A673 (cell line): ENCODE measurements at regions of chr7 and their contacts with region 1.

Region 1: DNA sequence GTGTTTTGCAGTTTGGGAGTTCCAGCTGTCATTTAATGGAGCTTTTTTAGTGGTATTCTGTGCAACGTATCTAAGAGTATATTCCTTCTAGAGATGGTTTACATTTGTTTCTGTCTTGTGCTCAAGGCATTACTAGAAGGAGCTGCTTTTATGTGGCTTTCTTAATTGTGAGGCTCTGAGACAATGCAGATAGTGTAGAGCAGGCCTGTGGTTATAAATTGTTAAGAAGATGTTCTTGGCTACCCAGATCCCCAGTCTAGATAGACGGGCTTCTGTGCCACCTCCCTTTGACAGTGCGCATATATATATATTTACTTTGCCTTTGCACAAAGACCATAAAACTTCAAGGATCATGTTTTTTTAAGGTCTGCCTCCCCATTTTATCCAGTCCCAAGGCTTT is 160.8 kb upstream of the PODXL start:
- DNase-seq: no peak
- H3K4me3 ChIP-seq: no peak overlapping the region
- H3K27ac ChIP-seq: no peak overlapping the region
- H3K4me1 ChIP-seq: peaks cover 6% of the 10 kb centered on the region
- H3K27me3 ChIP-seq: no peaks in the 10 kb centered on the region
- CTCF ChIP-seq: no peak

Region 2: DNA sequence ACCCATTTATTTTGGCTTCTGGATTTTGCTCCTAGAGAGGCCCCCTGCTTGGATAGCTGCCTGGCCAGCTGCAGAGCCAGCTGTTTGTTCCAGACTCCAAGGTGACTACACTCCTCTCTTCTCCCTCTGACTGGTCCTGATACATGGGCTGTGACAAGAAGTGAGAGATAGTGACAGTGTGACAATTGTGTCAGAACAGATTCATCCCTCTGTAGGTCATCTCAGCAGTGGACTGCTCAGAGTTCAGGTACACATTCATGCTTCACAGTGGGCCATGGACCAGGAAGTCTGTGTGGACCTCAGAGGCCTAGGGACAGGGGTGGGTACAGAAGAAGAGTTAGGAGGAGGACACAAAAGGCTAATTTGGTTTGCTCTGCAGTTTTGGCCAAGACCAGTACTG is 577.7 kb before region 1 on chr7:
- CTCF ChIA-PET with region 1: no interaction called
- POLR2A ChIA-PET with region 1: no interaction called
- intact Hi-C with region 1: no loop called
- DNase-seq: no peak
- H3K4me3 ChIP-seq: no peak overlapping the region
- H3K27ac ChIP-seq: no peak overlapping the region
- H3K4me1 ChIP-seq: peaks cover 5% of the 10 kb centered on the region
- H3K27me3 ChIP-seq: no peaks in the 10 kb centered on the region
- CTCF ChIP-seq: no peak

Region 3: DNA sequence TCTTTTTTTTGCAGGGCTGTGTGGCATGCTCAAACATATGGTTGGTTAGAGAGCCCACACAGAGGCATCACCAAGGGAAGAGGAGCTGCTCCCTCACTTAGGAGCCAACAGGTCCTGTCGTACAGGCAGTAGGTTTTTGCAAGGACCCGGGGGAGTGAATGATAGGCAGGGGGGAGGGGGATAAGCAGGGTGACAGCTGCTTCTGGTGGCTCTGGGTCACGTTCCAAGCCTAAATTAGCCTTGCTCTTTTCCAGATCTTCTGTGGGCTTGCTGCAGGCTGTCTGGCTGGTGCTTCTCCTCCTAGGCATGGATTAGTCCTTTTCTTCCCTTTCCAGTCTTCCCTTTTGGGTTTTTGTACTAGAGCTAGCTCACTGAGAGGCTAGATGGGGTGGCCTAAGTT is 43.0 kb before region 1 on chr7:
- CTCF ChIA-PET with region 1: no interaction called
- POLR2A ChIA-PET with region 1: no interaction called
- intact Hi-C with region 1: no loop called
- DNase-seq: no peak
- H3K4me3 ChIP-seq: no peak overlapping the region
- H3K27ac ChIP-seq: no peak overlapping the region
- H3K4me1 ChIP-seq: no peaks in the 10 kb centered on the region
- H3K27me3 ChIP-seq: peaks cover 17% of the 10 kb centered on the region
- CTCF ChIP-seq: no peak

Region 4: DNA sequence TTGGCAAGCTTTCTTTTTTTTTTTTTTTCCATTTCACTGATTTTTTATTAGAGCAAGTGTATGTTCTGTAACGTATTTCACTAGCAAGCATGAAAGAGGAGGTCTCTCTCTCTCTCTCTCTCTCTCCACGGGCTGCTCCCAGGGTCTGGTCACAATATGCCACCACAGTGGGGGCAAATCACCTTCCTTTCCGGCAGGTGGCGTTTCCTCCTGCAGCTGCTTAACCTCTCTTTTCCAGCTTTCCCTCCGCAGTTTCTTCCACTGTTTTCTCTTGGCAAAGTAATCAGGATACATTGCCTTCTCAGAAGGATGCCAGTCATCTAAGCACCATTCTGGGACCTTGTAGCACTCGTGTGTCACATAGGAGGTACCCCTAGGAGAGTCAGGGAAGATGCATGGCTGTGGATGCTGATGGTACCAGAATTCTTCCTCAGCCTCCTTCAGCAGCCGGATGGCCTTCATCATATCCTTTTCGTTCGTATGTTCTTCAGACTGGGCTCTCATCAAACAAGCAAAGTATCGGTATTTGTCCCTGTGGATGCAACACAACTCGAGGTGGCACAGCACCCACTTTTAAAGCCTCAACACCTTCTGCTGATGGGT is 36.5 kb after region 1 on chr7:
- CTCF ChIA-PET with region 1: no interaction called
- POLR2A ChIA-PET with region 1: no interaction called
- intact Hi-C with region 1: no loop called
- DNase-seq: peak; percentile 50
- H3K4me3 ChIP-seq: no peak overlapping the region
- H3K27ac ChIP-seq: no peak overlapping the region
- H3K4me1 ChIP-seq: no peaks in the 10 kb centered on the region
- H3K27me3 ChIP-seq: peaks cover 65% of the 10 kb centered on the region
- CTCF ChIP-seq: peak; percentile 57

Region 5: DNA sequence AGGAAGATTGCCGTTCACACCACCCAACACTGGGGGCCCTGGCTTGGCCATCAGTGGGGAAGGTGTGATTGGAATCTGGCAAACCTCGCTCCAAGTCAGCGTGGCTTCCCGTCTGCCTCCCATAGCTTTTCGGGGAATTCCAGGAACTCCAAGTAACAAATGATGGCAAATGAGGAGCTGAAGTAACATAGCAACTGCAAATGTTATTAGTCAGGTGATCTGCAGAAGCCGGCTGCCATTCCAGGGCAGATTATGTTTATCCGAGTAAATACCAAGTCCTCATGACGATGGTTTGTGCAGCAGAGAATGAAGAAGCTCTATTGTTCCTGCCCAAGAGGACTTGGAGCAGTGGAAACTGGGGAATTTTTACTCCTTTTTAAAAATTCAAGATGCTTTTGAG is 109.8 kb after region 1 on chr7:
- CTCF ChIA-PET with region 1: no interaction called
- POLR2A ChIA-PET with region 1: interaction called, 21 read pairs
- intact Hi-C with region 1: no loop called
- DNase-seq: no peak
- H3K4me3 ChIP-seq: no peak overlapping the region
- H3K27ac ChIP-seq: no peak overlapping the region
- H3K4me1 ChIP-seq: no peaks in the 10 kb centered on the region
- H3K27me3 ChIP-seq: no peaks in the 10 kb centered on the region
- CTCF ChIP-seq: no peak